ENCODE measurements at regions of chr18 and their contacts with region 1.

Region 1: DNA sequence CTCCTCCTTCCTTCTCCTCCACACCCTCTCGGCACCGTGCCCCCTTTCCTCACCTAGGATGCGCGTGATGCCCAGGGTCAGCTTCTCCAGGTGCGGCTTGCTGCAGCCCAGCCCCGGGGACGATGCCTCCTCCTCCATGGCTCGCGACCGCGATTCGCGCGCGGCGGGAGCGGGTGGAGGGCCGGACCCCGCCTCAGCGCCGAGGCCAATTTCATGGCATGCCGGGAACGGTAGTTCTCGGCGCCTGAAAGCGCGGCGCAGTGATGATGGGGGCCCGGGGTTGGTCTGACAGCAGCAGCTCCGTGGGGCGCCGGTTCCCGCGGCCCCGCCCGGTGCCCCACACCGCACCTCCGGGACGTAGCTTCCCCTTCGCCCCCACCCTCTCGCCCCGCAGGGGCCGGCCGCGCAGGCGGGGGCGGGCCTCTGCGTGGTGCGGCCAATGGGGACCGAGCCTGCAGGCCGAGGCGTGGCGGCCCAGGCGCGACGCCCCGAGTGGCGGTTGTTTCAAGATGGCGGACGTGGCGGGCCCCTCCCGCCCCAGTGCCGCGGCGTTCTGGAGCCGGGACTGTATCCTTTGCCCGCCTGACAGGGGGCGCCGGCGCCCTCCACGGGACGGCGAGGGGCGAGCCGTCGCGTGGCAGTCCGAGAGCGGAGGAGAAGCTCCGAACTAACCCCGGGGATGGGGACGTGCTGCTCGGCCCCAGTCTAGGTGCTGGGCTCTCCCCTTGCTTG is at the starts of genes KIAA1328 and TPGS2:
- DNase-seq: peak; percentile 68 to 96 (median 83)
- ATAC-seq: peak; percentile 90
- H3K4me3 ChIP-seq: peak within 1 kb of the TSS; percentile 86
- H3K4me3 Mint-ChIP-seq: peak within 1 kb of the TSS; percentile 87
- H3K27ac ChIP-seq: peak within 1 kb of the TSS; percentile 58 to 78
- H3K27ac Mint-ChIP-seq: peak within 1 kb of the TSS; percentile 73
- H3K4me1 ChIP-seq: peaks cover 24% of the 10 kb centered on the region
- H3K4me1 Mint-ChIP-seq: peaks cover 60% of the 10 kb centered on the region
- H3K27me3 ChIP-seq: no peaks in the 10 kb centered on the region
- H3K27me3 Mint-ChIP-seq: no peaks in the 10 kb centered on the region
- CTCF ChIP-seq: peak; percentile 63
- total RNA-seq, gene KIAA1328: 8.7 to 9.4 TPM
- total RNA-seq, gene TPGS2: 16.4 to 19.0 TPM

Region 2: GRCh38 chr18:36067055-36067957 is 761.5 kb before region 1 on chr18 and contains the start of gene RPRD1A:
- CTCF ChIA-PET with region 1: interaction called, 3 read pairs
- POLR2A ChIA-PET with region 1: no interaction called
- intact Hi-C with region 1: loop called in 1 of 2 experiments (anchors 2 kb)
- DNase-seq: peak; percentile 92 to 98 (median 96)
- ATAC-seq: peak; percentile 94
- H3K4me3 ChIP-seq: peak within 1 kb of the TSS; percentile 96
- H3K4me3 Mint-ChIP-seq: peak within 1 kb of the TSS; percentile 91
- H3K27ac ChIP-seq: peak within 1 kb of the TSS; percentile 65 to 86
- H3K27ac Mint-ChIP-seq: peak within 1 kb of the TSS; percentile 91
- H3K4me1 ChIP-seq: peaks cover 17% of the 10 kb centered on the region
- H3K4me1 Mint-ChIP-seq: peaks cover 46% of the 10 kb centered on the region
- H3K27me3 ChIP-seq: no peaks in the 10 kb centered on the region
- H3K27me3 Mint-ChIP-seq: no peaks in the 10 kb centered on the region
- CTCF ChIP-seq: no peak
- total RNA-seq, gene RPRD1A: 21.8 to 25.1 TPM

Region 3: DNA sequence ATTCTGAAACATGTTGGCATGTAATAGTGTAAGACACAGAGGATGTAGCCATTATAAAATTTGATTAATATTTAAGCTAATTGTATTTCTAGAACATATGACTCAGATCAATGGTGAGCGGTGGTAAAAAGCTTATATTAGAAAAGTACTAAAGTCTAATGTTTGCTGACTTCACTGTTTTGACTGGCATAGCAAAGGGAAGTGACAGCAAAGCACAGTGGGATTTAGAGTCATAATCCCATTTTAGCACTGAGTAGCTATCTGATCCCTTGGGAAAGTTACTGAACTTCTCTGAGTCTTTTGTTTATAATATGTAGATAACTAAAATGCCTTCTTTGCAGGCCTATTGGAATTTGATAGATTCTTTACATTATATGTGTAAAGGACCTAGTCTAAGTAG is 60.5 kb after region 1 on chr18:
- CTCF ChIA-PET with region 1: no interaction called
- POLR2A ChIA-PET with region 1: no interaction called
- intact Hi-C with region 1: no loop called
- DNase-seq: no peak
- ATAC-seq: no peak
- H3K4me3 ChIP-seq: no peak overlapping the region
- H3K4me3 Mint-ChIP-seq: no peak overlapping the region
- H3K27ac ChIP-seq: no peak overlapping the region
- H3K27ac Mint-ChIP-seq: no peak overlapping the region
- H3K4me1 ChIP-seq: no peaks in the 10 kb centered on the region
- H3K4me1 Mint-ChIP-seq: peaks cover 6% of the 10 kb centered on the region
- H3K27me3 ChIP-seq: no peaks in the 10 kb centered on the region
- H3K27me3 Mint-ChIP-seq: no peaks in the 10 kb centered on the region
- CTCF ChIP-seq: no peak